HAP-1 (cell line): ENCODE measurements at regions of chr17 and their contacts with region 1.

Region 1: GRCh38 chr17:27455914-27456680 is at the start of gene KSR1:
- DNase-seq: peak; percentile 73 to 90
- H3K4me3 ChIP-seq: peak within 1 kb of the TSS; percentile 60
- H3K4me1 ChIP-seq: peaks cover 12% of the 10 kb centered on the region
- H3K27me3 ChIP-seq: no peaks in the 10 kb centered on the region

Region 2: GRCh38 chr17:27403480-27404005 is 52.6 kb before region 1 on chr17:
- in situ Hi-C with region 1: loop called (anchors 5 kb)
- DNase-seq: no peak
- H3K4me3 ChIP-seq: no peak overlapping the region
- H3K4me1 ChIP-seq: no peaks in the 10 kb centered on the region
- H3K27me3 ChIP-seq: no peaks in the 10 kb centered on the region